AG04449 (cell line): ENCODE measurements at regions of chr12 and their contacts with region 1.

Region 1: GRCh38 chr12:119659289-119659897 is 8.5 kb upstream of the PRKAB1 start:
- DNase-seq: no peak
- H3K4me3 ChIP-seq: no peak overlapping the region
- CTCF ChIP-seq: peak; percentile 65

Region 2: DNA sequence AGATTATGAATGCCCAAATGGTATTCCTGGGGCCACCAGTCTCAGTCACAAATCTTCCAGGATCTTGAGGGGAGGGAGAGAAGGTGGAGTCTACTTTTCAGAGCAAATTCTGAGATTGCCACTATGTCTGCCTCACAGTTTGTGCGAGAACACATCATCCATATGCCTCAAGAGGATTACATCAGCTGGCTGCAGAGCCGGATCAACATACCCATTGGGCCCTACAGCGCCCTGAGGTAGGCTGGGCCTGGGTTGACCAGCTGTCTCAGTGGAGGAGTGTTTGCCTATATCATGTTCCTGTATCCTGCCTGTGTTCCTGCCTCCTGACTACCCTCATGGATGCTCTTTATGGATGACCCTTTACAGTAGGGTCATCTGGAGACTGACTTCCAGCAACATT is 118.9 kb before region 1 on chr12:
- CTCF ChIA-PET with region 1: no interaction called
- POLR2A ChIA-PET with region 1: no interaction called
- DNase-seq: no peak
- H3K4me3 ChIP-seq: no peak overlapping the region
- CTCF ChIP-seq: no peak

Region 3: DNA sequence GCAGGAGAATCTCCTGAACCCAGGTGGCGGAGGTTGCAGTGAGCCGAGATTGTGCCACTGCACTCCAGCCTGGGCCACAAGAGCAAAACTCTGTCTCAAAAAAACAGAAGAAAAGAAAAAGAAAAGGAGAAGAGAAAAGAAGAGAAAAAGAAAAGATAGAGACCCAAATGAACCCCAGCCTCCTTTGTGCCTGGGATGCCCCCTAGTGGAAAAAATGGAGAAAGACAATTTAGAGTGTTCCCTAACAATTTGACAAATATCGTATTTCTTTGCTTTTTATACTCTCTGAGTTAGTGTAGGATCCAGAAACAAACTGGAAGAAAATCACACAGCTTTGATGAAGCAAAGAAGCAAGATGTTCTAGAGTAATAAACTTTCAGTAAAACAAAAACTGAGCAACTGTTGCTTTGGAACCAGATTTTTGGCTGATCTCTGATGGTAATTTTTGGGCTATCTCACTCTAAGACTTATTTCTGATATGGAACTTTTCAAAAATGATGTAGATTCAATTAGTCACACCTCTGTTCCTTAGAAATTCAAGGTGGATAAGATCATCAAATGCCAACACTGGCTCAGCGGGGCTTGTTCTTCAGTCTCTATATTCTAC is 10.1 kb before region 1 on chr12:
- CTCF ChIA-PET with region 1: interaction called, 12 read pairs
- POLR2A ChIA-PET with region 1: no interaction called
- DNase-seq: no peak
- H3K4me3 ChIP-seq: no peak overlapping the region
- CTCF ChIP-seq: peak; percentile 24